Mammary epithelial cell (primary cell): ENCODE measurements at regions of chr16 and their contacts with region 1.

Region 1: GRCh38 chr16:69754469-69755310 is at the start of gene NOB1:
- DNase-seq: peak; percentile 95
- H3K4me3 ChIP-seq: peak within 1 kb of the TSS; percentile 63 to 97 (median 75)
- H3K27ac ChIP-seq: peak within 1 kb of the TSS; percentile 79
- H3K4me1 ChIP-seq: peaks cover 2% of the 10 kb centered on the region
- H3K27me3 ChIP-seq: no peaks in the 10 kb centered on the region
- CTCF ChIP-seq: peak; percentile 86 to 100
- total RNA-seq, gene NOB1: 30.7 to 72.3 TPM

Region 2: DNA sequence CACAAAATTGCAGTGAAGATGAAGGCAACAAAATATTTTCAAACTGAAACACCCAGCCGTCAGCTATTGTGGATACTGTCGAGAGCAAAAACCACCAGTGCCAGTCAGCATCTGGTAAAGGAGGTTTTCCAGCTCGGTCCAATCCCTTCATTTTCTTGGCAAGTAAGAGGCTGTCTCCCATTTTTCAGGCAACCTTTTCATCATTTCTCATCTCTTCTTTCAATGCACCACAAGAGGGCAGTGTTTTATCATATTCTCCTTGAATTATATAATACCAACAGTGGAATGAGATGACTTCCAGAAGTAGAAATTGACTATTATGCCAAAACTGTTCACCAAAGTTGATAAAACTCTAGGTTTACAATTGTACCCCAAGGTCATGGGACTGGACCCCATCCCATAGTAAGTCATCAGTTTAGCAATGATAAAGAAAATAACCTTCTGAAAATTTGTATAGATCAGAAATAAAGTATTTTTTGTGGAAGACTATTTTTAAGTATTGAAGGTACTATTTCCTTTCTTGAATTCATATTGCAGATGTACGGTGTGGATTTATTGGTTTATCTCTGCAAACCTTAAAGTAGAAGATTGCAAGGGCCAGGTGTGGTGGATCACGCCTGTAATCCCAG is 45.1 kb before region 1 on chr16:
- CTCF ChIA-PET with region 1: interaction called, 3 read pairs
- dilution Hi-C with region 1: no loop called
- in situ Hi-C with region 1: loop called in 1 of 2 experiments (anchors 5 kb)
- intact Hi-C with region 1: loop called (anchors 1 kb)
- DNase-seq: peak; percentile 60
- H3K4me3 ChIP-seq: no peak overlapping the region
- H3K27ac ChIP-seq: no peak overlapping the region
- H3K4me1 ChIP-seq: peaks cover 33% of the 10 kb centered on the region
- H3K27me3 ChIP-seq: no peaks in the 10 kb centered on the region
- CTCF ChIP-seq: peak; percentile 61 to 63

Region 3: DNA sequence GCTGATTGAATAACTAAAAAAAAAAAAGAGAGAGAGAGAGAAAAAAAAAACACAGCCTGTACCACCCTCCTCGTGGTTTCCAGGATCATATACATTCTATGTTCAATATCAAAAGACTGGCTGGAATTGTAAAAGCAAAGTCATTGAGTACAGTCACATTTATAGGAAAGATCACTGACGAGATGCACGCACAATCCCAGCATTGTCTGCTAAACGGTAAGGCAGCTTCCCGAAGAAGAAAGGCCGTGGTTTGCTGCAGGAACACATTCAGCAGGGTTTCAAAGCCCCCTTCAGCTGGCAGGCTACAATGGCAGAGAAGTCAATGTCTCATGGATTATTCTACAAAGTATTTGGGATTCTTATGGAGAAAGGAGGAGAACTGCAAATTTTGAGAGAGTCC is 37.6 kb before region 1 on chr16:
- CTCF ChIA-PET with region 1: no interaction called
- dilution Hi-C with region 1: loop called (anchors 5 kb)
- in situ Hi-C with region 1: loop called in 1 of 2 experiments (anchors 5 kb)
- intact Hi-C with region 1: no loop called
- DNase-seq: no peak
- H3K4me3 ChIP-seq: no peak overlapping the region
- H3K27ac ChIP-seq: no peak overlapping the region
- H3K4me1 ChIP-seq: peaks cover 6% of the 10 kb centered on the region
- H3K27me3 ChIP-seq: no peaks in the 10 kb centered on the region
- CTCF ChIP-seq: no peak

Region 4: GRCh38 chr16:69726296-69727060 is 28.2 kb before region 1 on chr16 and contains the start of gene NQO1:
- CTCF ChIA-PET with region 1: no interaction called
- dilution Hi-C with region 1: no loop called
- in situ Hi-C with region 1: no loop called
- intact Hi-C with region 1: loop called (anchors 1 kb)
- DNase-seq: peak; percentile 98
- H3K4me3 ChIP-seq: peak within 1 kb of the TSS; percentile 46 to 72 (median 58)
- H3K27ac ChIP-seq: peak within 1 kb of the TSS; percentile 86
- H3K4me1 ChIP-seq: peaks cover 22% of the 10 kb centered on the region
- H3K27me3 ChIP-seq: no peaks in the 10 kb centered on the region
- CTCF ChIP-seq: no peak
- total RNA-seq, gene NQO1: 241 to 421 TPM